ENCODE measurements at regions of chr6 and their contacts with region 1.

Region 1: DNA sequence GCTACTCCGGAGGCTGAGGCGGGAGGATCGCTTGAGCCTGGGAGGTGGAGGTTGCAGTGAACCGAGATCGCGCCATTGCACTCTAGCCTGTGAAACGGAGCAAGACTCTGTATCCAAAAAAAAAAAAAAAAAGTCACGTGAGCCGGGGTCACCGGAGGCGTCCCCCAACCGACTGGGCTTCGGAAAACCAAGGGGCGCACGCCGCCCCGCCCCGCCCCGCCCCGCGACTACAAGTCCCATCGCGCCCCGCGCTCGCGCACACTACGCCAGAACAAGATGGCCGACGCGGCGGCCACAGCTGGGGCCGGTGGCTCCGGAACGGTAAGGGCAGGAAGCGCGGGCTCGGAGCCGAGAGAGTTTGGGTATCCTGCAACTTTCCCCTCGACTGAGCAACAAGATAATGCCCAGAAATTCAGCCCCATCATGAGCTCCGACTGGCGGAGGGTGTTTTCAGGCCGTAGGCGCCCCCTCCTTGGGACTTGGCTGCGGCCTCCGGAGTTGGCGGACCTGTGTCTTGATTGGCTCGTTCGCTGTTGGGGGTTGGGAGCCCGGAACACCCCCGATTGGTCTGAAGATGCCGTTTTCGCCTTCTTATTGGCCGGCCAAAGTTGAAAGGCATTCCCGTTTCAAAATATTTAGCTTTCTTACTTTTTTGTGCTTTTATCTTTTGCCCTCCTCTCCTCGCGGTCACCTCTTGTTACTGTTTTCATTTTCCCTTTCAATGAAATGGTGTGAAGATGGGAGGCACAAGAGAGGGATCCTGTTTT is at the start of gene TAF8:
- DNase-seq: peak; percentile 94
- ATAC-seq: peak; percentile 90
- H3K4me3 ChIP-seq: peak within 1 kb of the TSS; percentile 68 to 100 (median 99)
- H3K27ac ChIP-seq: peak within 1 kb of the TSS; percentile 96
- H3K4me1 ChIP-seq: peaks cover 53% of the 10 kb centered on the region
- H3K27me3 ChIP-seq: no peaks in the 10 kb centered on the region; a peak in 2 of 5 replicates
- CTCF ChIP-seq: peak; percentile 29; the same call in 1 of the 2 replicates
- EP300 ChIP-seq: peak; percentile 20 to 82; a peak in 1 of 4 replicates
- POLR2A ChIP-seq: peak; percentile 91 to 100
- RAD21 ChIP-seq: peak; percentile 57
- total RNA-seq, gene TAF8: 20.2 and 25.2 TPM in 2 replicates

Region 2: DNA sequence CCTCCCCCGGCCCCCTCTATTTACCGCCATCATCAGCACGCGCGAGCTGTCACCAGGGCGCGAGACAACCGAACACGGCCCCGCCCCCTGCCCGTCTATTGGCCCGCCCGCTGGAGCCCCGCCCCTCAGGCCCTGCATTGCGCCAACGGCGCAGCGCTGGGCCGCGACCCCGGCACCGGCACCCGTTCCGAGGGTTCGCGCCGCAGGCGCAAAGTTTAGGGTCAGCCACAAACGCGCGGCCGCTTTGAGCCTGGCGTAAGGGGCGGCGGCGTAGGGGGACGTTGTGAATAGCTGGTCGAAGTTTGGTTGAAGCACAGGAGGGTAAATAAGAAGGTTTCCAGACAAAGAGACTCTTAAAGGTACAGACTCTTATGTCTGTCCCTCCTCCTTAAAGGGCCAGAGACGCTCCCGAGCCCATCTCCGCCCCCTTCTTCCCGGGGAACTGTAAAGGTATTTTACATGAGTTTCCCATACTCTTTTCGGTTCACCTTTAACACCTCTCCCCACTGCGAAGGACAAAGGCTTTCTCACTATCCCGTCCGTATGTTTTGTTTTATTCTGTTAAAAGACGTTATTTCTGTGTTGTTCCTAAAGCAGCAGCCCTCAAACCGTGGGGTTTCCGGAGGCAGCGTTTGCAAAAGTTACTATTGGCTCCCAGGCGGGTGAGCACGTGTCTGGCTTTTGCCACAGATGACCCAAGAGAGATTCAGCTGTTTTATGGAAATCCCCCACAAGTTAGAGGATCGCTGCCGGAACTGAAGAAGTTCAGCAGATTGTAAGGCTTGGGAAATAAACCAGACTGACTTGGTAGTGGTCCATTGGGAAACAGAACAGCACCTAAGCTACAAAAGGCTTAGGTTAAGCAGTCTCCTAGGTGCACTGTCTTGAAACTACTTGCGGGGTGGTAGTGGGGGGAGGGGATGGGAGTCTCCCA is 154.9 kb before region 1 on chr6 and contains the start of gene USP49:
- CTCF ChIA-PET with region 1: no interaction called
- POLR2A ChIA-PET with region 1: interaction called, 16 read pairs
- in situ Hi-C with region 1: no loop called
- intact Hi-C with region 1: no loop called
- DNase-seq: peak; percentile 78
- ATAC-seq: peak; percentile 94
- H3K4me3 ChIP-seq: peak within 1 kb of the TSS; percentile 79 to 81 (median 79)
- H3K27ac ChIP-seq: peak within 1 kb of the TSS; percentile 57
- H3K4me1 ChIP-seq: peaks cover 30% of the 10 kb centered on the region
- H3K27me3 ChIP-seq: no peaks in the 10 kb centered on the region; a peak in 1 of 5 replicates
- CTCF ChIP-seq: no peak
- EP300 ChIP-seq: no peak
- POLR2A ChIP-seq: no peak
- RAD21 ChIP-seq: no peak
- total RNA-seq, gene USP49: 2.9 TPM in 2 replicates

Region 3: GRCh38 chr6:42066156-42066555 is 15.7 kb after region 1 on chr6:
- CTCF ChIA-PET with region 1: no interaction called
- POLR2A ChIA-PET with region 1: interaction called, 12 read pairs
- in situ Hi-C with region 1: no loop called
- intact Hi-C with region 1: no loop called
- DNase-seq: no peak
- ATAC-seq: no peak
- H3K4me3 ChIP-seq: no peak overlapping the region
- H3K27ac ChIP-seq: no peak overlapping the region
- H3K4me1 ChIP-seq: no peaks in the 10 kb centered on the region
- H3K27me3 ChIP-seq: no peaks in the 10 kb centered on the region
- CTCF ChIP-seq: no peak
- EP300 ChIP-seq: no peak
- POLR2A ChIP-seq: no peak
- RAD21 ChIP-seq: no peak

Measured in HepG2 (cell line).